ENCODE measurements at regions of chr6 and their contacts with region 1.

Region 1: GRCh38 chr6:106979427-106979884 is 4.9 kb upstream of the CD24 start:
- DNase-seq: peak; percentile 80
- CTCF ChIP-seq: peak; percentile 98

Region 2: GRCh38 chr6:106339334-106340029 is 640.0 kb before region 1 on chr6:
- CTCF ChIA-PET with region 1: interaction called, 11 read pairs
- POLR2A ChIA-PET with region 1: no interaction called
- DNase-seq: peak; percentile 64
- CTCF ChIP-seq: peak; percentile 54

Region 3: DNA sequence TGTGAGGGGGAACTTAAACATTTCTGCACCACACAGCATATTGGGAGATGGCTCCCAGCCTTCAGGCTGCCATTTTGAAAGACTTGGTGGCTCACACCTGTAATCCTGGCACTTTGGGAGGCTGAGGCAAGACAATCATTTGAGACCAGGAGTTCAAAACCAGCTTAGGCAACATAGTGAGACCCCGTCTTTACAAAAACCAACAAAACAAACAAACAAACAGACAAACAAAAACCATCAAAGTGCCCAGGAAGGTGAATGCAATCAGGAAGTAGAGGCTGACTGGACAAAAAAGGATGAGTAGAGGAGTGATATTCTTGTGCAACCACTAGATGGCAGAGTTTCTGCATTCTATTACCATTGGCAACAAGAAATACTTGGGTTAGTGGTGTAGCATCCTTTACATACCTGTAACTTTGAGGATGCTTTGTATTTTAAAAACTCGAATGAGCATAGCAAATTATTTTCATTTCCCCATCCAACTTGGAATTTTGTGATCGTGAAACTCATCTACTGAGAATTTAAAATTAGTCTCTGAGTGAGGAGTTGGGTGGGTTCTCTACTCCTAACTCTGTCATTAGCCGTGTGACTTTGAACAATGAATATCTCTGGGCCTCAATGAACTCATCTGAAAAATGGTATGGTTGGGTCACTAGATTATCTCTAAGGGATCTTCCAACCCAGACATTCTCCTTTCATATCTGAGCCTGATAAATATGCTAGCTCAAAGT is 534.5 kb before region 1 on chr6:
- CTCF ChIA-PET with region 1: interaction called, 28 read pairs
- POLR2A ChIA-PET with region 1: no interaction called
- DNase-seq: peak; percentile 64
- CTCF ChIP-seq: peak; percentile 70

Region 4: GRCh38 chr6:106574741-106575458 is 404.6 kb before region 1 on chr6:
- CTCF ChIA-PET with region 1: interaction called, 14 read pairs
- POLR2A ChIA-PET with region 1: no interaction called
- DNase-seq: no peak
- CTCF ChIP-seq: no peak

Region 5: DNA sequence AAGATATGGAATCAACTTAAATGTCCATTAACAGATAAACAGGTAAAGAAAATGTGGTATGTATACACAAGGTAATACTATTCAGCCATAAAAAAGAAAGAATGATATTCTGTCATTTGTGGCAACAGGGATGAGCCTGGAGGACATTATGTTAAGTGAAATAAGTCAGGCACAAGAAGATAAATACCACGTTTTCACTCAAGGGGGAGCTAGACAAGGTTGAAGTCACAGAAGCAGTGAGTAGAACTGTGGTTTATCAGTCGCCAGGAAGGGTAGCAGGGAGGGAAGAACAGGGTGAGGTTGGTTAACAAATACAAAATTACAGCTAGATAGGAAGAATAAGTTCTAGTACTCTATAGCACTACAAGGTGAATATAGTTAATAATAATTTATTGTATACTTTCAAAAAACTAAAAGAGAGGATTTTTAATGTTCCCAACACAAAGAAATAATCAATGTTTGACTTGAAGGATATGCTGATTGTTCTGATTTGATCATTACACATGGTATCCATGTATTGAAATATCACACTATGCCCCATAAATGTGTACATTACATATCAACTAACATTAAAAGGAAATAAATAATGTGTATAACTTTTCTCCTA is 371.3 kb before region 1 on chr6:
- CTCF ChIA-PET with region 1: interaction called, 18 read pairs
- POLR2A ChIA-PET with region 1: no interaction called
- DNase-seq: peak; percentile 51
- CTCF ChIP-seq: peak; percentile 78

Region 6: GRCh38 chr6:106997390-106998158 is 18.1 kb after region 1 on chr6:
- CTCF ChIA-PET with region 1: interaction called, 22 read pairs
- POLR2A ChIA-PET with region 1: no interaction called
- DNase-seq: peak; percentile 78
- CTCF ChIP-seq: peak; percentile 81

Region 7: DNA sequence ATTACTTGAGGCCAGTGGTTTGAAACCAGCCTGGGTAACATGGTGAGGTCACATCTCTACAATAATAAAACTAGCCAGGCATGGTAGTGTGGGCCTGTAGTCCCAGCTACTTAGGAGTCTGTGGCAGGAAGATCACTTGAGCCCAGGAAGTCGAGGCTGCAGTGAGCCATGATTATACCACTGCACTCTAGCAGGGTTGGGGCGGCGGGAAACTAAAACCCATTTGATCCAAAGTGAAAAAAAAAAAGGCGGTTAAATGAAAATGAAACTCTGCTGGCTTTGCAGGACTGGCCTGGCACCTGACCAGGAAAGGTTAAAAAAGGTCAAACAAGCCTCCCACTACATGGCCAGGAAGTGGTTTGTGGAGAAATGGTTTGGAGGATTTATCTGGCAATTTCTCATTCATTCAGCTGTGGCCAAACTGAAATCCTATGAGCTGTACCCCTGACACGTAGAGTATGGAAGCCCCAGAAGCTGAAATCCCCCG is 85.2 kb after region 1 on chr6:
- CTCF ChIA-PET with region 1: no interaction called
- POLR2A ChIA-PET with region 1: no interaction called
- DNase-seq: no peak
- CTCF ChIP-seq: no peak